ENCODE measurements at regions of chr2 and their contacts with region 1.

Region 1: GRCh38 chr2:88002359-88002707 is 14.0 kb downstream of the RNU2-63P start:
- DNase-seq: no peak
- H3K4me3 ChIP-seq: no peak overlapping the region
- H3K27me3 ChIP-seq: no peaks in the 10 kb centered on the region
- CTCF ChIP-seq: no peak

Region 2: DNA sequence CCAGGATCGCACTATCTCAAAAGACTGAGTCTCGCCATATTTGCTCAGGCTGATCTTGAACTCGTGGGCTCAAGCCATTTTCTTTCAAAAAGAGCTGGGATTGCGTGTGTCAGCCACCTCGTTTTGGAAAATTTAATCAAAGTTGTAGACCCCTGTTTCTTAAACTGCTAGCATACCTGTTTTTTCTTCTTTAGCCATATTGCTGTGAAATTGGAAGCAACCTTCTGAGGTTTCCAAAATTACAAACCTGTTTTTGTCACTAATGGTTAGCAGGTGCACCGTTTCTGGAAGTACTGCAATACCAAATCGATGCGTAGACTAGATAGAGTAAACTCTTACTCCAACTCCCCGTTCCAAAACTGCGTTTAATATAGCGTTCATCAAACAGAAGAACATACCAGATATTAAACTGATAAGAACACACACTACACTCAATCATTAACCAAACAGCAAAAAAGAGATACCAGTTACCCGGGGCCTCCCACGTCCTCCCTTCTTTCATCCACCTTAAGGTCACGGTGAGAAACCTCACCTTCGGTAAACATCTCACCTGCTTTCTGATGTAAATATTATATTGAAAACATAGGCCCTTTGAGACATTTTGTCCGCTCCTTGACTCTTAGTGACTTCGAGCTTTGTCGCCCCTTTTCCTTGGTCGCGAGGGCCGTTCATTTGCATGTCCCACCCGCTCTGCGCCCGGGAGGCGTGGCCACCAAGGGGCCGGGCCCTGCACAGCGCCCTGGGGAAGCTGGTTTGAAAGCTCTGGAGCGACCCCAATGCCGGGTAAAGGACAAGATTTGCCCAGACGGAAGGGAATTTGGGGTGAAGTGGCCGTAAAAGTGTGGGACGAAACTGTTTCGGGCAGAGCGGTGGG is 14.0 kb after region 1 on chr2 and contains the start of gene RNU2-63P:
- CTCF ChIA-PET with region 1: interaction called, 10 read pairs
- POLR2A ChIA-PET with region 1: no interaction called
- DNase-seq: peak; percentile 39
- H3K4me3 ChIP-seq: peak within 1 kb of the TSS; percentile 42
- H3K27me3 ChIP-seq: no peaks in the 10 kb centered on the region; the same call in 1 of the 2 replicates
- CTCF ChIP-seq: no peak
- polyA plus RNA-seq, gene RNU2-63P: not detected in 2 replicates

Region 3: DNA sequence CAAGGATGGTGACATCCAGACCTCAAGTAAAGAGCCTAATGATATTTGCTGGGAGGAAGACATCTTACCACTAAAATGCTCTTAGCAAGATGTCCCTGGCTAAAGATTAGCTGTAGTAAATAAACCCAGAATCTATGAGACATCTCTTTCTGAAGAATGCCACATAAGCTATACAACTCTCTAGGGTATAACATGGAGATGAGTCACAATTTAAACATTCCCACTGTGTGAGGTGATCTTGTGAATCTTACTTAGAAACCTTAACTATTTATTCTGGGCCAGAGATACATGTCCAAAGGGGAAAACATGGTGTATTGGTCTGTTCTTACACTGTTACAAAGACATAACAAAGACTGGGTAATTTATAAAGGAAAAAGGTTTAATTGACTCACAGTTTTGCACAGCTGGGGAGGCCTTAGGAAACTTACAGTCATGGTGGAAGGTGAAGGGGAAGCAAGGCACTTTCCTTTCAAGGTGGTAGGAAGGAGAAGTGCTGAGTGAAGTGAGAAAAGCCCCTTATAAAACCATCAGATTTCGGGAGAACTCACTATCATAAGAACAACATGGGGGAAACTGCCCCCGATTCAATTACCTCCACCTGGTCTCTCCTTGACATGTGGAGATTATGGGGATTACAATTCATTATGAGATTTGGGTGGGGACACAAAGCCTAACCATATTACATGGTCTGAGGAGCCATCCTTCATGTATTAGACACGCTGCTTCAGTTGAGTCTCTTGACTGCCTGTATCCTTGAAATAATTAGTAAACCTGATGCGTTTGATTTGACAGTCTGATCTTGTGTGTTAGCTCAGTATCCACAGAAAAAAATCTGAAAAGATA is 36.2 kb after region 1 on chr2:
- CTCF ChIA-PET with region 1: no interaction called
- POLR2A ChIA-PET with region 1: no interaction called
- DNase-seq: peak; percentile 77
- H3K4me3 ChIP-seq: no peak overlapping the region
- H3K27me3 ChIP-seq: no peaks in the 10 kb centered on the region
- CTCF ChIP-seq: no peak